Right ventricle myocardium superior (tissue), 1 donor: ENCODE measurements at regions of chr18 and their contacts with region 1.

Region 1: GRCh38 chr18:58493516-58494253 is 135.2 kb downstream of the ALPK2 start:
- DNase-seq: peak; percentile 73
- ATAC-seq: peak; percentile 92

Region 2: DNA sequence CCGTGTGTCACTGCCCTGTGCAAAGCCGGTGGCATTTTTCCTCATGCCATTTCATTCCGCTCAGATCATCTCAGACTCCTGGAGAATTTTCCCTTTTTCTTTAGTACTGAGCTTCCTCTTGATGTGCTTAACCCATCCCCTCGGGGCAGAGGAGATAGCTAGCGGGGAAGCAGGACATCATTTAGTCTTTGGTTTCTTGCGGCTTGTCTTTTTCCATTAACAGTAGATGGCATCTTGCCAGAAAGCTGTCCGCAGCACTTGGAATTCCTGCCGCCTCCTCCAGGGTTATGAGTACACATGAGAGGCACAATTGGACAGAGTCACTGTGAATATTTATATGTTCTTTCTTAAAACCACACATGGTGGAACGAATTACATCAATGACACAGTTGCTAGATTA is 91.4 kb before region 1 on chr18:
- intact Hi-C with region 1: loop called (anchors 5 kb)
- DNase-seq: no peak
- ATAC-seq: peak; percentile 46